Activated T-helper 2 cell treated with anti-CD3 and anti-CD28 coated beads, Interferon-gamma antibody, Interleukin-2, Interleukin-4, amounts not matched to agents 10 μg/mL and 5 μg/mL and 100 μg/mL, durations not matched to agents 14 hours and 24 hours and 36 hours (primary cell): ENCODE measurements at regions of chr2 and their contacts with region 1.

Region 1: DNA sequence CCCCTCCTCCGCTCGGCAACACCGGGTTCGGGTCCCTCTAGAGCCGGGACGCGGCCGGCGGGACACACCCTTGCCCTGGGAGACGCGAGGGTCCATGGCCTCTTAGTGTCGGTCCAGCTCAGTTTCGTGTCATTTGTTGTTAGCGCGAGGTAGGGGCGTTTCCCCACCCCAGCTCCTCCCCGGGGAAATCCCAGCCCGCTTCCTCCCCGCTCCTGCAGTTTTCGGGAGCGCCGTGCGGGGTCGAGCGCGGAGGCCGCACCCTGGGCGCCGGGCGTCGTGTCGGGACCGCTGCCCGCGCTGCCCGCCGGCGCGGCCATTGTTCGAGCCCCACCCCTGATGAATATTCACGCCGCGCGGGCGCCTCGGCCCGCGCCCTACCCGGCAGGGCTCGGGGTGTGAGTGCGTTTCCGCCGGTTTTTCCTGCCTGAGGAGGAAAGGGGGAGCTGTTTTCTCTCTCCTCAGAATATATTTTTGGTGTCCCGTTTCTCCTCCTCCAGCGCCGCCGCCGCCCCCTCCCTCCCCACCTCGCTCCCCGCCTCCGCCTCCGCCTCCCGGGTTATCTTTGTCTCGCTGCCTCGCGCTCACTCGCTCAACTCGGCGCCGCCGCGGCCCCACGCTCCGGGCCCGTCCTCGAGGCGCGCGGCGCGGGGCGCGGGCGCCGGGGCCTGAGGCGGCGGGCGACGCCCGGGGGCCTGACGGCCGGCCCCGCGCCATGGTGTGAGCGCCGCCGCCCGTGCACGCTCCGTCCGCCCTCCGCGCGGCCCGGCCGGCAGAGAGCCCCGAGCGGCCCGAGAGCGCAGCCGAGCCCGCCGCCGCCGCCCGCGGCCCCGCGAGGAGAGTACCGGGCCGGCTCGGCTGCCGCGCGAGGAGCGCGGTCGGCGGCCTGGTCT is at the start of gene MAP4K4:
- DNase-seq: peak; percentile 69
- H3K4me3 Mint-ChIP-seq: peak within 1 kb of the TSS; percentile 84
- H3K27ac Mint-ChIP-seq: peak within 1 kb of the TSS; percentile 83
- H3K4me1 Mint-ChIP-seq: peaks cover 21% of the 10 kb centered on the region
- H3K27me3 Mint-ChIP-seq: no peaks in the 10 kb centered on the region
- total RNA-seq, gene MAP4K4: 36.8 and 40.6 TPM in 2 replicates

Region 2: DNA sequence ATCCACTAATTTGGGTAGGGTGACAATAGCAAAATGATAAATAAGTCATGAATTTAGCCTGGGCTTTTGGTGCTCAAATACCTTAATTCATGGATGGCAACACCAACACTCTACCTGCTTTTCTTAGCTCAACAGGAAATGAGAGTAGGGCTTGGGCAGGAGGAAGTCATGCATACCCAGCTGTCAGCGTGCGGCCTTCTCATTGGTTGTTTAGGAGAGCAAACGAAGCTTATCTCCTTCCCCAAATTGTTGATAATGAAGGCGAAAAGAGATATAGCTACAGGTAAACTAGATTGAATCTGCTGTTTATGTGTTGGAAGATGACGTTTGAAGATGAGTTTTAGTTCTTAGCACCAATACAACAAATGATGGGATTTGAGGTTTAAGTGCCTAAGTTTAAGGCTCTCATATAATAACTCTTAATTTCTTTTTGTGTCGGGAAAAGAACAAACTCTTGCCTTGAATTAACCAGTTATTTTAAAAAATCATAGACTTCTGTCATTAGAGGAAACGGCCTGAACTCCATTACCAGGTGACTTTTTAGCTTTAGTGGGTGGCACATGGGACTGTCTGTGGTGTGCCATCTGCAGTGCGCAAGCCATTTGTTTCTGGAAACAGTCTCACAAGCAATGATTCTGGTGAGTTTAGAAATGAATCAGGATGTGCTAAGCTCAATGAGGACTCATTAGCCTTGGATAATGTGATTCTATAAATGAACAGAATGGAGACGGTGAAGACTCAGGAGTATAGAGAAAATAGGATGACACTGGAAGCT is 19.9 kb after region 1 on chr2:
- intact Hi-C with region 1: loop called (anchors 1 kb)
- DNase-seq: no peak
- H3K4me3 Mint-ChIP-seq: peak overlapping the region; percentile 38
- H3K27ac Mint-ChIP-seq: peak overlapping the region; percentile 83
- H3K4me1 Mint-ChIP-seq: peaks cover 60% of the 10 kb centered on the region
- H3K27me3 Mint-ChIP-seq: no peaks in the 10 kb centered on the region

Region 3: DNA sequence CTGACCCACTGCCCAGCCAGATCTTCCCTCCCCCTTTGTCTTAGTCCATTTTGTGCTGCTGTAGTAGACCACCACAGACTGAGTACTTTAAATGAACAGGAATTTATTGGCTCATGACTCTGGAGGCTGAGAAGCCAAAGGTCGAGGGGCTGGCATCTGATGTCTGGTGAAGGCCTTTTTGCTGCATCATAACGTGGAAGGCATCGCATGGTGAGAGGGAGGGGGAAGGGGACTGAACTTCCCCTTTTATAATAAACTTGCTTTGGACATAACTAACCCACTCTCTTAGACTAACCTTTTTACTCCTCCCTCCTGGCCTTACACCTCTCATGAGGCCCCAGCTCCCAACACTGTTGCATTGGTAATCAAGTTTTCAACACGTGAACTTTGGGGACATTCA is 84.0 kb after region 1 on chr2:
- intact Hi-C with region 1: no loop called
- DNase-seq: no peak
- H3K4me3 Mint-ChIP-seq: no peak overlapping the region
- H3K27ac Mint-ChIP-seq: no peak overlapping the region
- H3K4me1 Mint-ChIP-seq: peaks cover 32% of the 10 kb centered on the region
- H3K27me3 Mint-ChIP-seq: no peaks in the 10 kb centered on the region

Region 4: GRCh38 chr2:101806123-101806522 is 108.8 kb after region 1 on chr2:
- intact Hi-C with region 1: no loop called
- DNase-seq: no peak
- H3K4me3 Mint-ChIP-seq: no peak overlapping the region
- H3K27ac Mint-ChIP-seq: peak overlapping the region; percentile 1
- H3K4me1 Mint-ChIP-seq: peaks cover 23% of the 10 kb centered on the region
- H3K27me3 Mint-ChIP-seq: no peaks in the 10 kb centered on the region